ENCODE measurements at regions of chr15 and their contacts with region 1.

Region 1: DNA sequence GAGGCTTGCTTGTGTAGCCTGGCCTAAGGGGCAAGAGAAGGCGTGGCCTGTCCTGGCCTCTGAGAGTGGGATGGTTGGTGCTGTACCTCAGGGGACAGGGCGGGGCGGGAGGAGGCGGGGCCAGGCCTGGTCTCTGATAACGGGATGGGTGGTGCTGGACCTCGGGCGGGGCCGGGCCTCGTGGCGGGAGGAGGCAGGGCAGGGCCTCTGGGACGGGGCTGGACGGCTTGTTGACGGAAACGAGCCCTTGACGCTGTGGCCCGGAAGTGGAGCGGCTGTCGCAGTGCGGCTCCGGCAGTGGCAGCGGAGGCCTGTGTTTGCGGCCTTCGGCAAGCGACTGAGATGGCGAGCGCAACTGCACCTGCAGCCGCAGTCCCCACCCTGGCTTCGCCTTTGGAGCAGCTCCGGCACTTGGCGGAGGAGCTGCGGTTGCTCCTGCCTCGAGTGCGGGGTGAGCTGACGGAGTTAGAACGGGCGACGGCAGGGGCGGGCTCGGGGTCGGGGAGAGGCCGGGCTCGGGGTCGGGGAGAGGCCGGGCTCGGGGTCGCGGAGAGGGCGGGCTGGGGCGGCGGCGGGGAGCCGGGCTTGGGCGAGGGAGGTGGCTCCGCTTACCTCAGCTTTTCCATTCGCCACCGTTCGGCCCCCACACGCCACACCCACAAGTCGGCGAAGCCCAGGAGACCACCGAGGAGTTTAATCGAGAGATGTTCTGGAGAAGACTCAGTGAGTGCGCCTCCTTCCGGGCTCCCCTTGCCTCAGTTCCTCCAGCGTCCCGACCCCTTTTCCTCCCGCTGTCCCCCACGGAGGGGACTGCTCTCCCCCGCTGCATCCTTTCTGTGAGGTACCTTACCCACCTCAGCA is at the start of gene CCNDBP1:
- DNase-seq: peak; percentile 85
- ATAC-seq: peak; percentile 93
- H3K4me3 Mint-ChIP-seq: peak within 1 kb of the TSS; percentile 97
- H3K27ac Mint-ChIP-seq: peak within 1 kb of the TSS; percentile 96
- H3K4me1 Mint-ChIP-seq: peaks cover 32% of the 10 kb centered on the region
- H3K27me3 Mint-ChIP-seq: no peaks in the 10 kb centered on the region
- CTCF ChIP-seq: no peak
- total RNA-seq, gene CCNDBP1: 65.6 and 67.2 TPM in 2 replicates

Region 2: GRCh38 chr15:42704492-42704926 is 480.9 kb before region 1 on chr15:
- CTCF ChIA-PET with region 1: no interaction called
- POLR2A ChIA-PET with region 1: no interaction called
- intact Hi-C with region 1: loop called (anchors 1 kb)
- DNase-seq: peak; percentile 24
- ATAC-seq: peak; percentile 90
- H3K4me3 Mint-ChIP-seq: no peak overlapping the region
- H3K27ac Mint-ChIP-seq: no peak overlapping the region
- H3K4me1 Mint-ChIP-seq: no peaks in the 10 kb centered on the region
- H3K27me3 Mint-ChIP-seq: no peaks in the 10 kb centered on the region
- CTCF ChIP-seq: no peak

Region 3: DNA sequence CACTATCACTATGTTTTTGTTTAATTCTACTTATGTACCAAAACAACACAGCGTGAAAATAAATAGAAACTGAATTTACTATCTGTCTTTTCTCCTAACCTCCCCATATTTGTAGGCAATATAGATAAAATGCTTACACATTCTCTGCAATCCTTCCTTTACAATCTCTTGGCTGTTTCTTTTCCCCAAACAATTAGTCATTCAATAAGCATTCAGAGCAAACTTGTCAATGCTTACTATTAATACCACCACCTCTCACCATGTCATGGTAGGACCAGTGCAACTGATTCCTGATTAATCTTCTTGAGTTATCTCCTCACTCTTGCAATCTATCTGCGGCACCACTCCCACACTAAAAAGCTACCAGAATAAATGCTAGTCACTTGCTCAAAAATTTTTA is 190.8 kb before region 1 on chr15:
- CTCF ChIA-PET with region 1: no interaction called
- POLR2A ChIA-PET with region 1: no interaction called
- intact Hi-C with region 1: no loop called
- DNase-seq: no peak
- ATAC-seq: no peak
- H3K4me3 Mint-ChIP-seq: no peak overlapping the region
- H3K27ac Mint-ChIP-seq: no peak overlapping the region
- H3K4me1 Mint-ChIP-seq: no peaks in the 10 kb centered on the region
- H3K27me3 Mint-ChIP-seq: no peaks in the 10 kb centered on the region
- CTCF ChIP-seq: no peak

Region 4: DNA sequence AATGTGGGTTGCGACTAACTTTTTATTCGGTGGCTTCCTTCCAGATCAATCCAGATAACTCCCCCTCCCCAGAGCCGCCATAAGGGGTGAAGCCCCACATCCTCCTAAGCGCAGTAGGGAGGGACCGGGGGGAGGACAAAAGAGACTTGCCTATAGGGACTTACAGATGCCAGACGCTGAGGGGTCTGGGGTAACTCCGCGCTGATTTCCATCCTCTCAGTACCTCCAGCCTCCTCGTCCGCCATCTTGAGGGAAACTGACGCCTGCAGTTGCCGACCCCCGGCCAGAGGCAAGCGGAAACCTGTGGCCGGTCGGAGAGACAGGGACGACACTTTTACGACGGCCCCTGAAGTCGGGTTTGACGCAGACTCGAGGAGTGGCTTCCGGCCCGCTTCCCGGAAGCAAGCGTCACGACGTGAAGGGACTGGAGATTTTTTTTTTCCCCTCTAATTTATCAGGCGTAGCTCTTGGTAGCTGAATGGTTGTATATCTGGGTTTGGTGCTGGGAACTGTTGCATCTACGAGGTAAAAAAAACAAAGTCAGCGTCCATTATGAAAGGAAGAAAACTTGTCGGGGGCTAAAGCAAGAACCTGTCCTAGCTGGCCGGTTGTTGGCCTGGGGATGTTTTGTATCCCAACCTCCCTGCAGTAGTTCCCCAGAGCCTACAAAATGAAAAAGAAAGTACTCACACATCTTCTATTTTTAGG is 79.5 kb before region 1 on chr15 and contains the start of gene UBR1:
- CTCF ChIA-PET with region 1: no interaction called
- POLR2A ChIA-PET with region 1: interaction called, 9 read pairs
- intact Hi-C with region 1: loop called (anchors 1 kb)
- DNase-seq: peak; percentile 78
- ATAC-seq: peak; percentile 94
- H3K4me3 Mint-ChIP-seq: peak within 1 kb of the TSS; percentile 98
- H3K27ac Mint-ChIP-seq: peak within 1 kb of the TSS; percentile 98
- H3K4me1 Mint-ChIP-seq: peaks cover 46% of the 10 kb centered on the region
- H3K27me3 Mint-ChIP-seq: no peaks in the 10 kb centered on the region
- CTCF ChIP-seq: no peak
- total RNA-seq, gene UBR1: 46.6 and 48.9 TPM in 2 replicates

Region 5: GRCh38 chr15:43204016-43204901 is 18.9 kb after region 1 on chr15:
- CTCF ChIA-PET with region 1: interaction called, 8 read pairs
- POLR2A ChIA-PET with region 1: no interaction called
- intact Hi-C with region 1: loop called (anchors 2 kb)
- DNase-seq: peak; percentile 28
- ATAC-seq: peak; percentile 56
- H3K4me3 Mint-ChIP-seq: no peak overlapping the region
- H3K27ac Mint-ChIP-seq: no peak overlapping the region
- H3K4me1 Mint-ChIP-seq: peaks cover 6% of the 10 kb centered on the region
- H3K27me3 Mint-ChIP-seq: peaks cover 8% of the 10 kb centered on the region
- CTCF ChIP-seq: peak; percentile 29

Region 6: GRCh38 chr15:43329960-43330779 is 144.8 kb after region 1 on chr15 and contains the start of gene LCMT2:
- CTCF ChIA-PET with region 1: no interaction called
- POLR2A ChIA-PET with region 1: no interaction called
- intact Hi-C with region 1: loop called (anchors 1 kb)
- DNase-seq: peak; percentile 85
- ATAC-seq: peak; percentile 85
- H3K4me3 Mint-ChIP-seq: peak within 1 kb of the TSS; percentile 97
- H3K27ac Mint-ChIP-seq: peak within 1 kb of the TSS; percentile 99
- H3K4me1 Mint-ChIP-seq: peaks cover 32% of the 10 kb centered on the region
- H3K27me3 Mint-ChIP-seq: no peaks in the 10 kb centered on the region
- CTCF ChIP-seq: no peak
- total RNA-seq, gene LCMT2: 15.5 and 17.1 TPM in 2 replicates

Region 7: GRCh38 chr15:43749690-43750345 is 564.4 kb after region 1 on chr15:
- CTCF ChIA-PET with region 1: no interaction called
- POLR2A ChIA-PET with region 1: no interaction called
- intact Hi-C with region 1: loop called (anchors 2 kb)
- DNase-seq: no peak
- ATAC-seq: peak; percentile 41
- H3K4me3 Mint-ChIP-seq: peak overlapping the region; percentile 72
- H3K27ac Mint-ChIP-seq: peak overlapping the region; percentile 87
- H3K4me1 Mint-ChIP-seq: peaks cover 70% of the 10 kb centered on the region
- H3K27me3 Mint-ChIP-seq: no peaks in the 10 kb centered on the region
- CTCF ChIP-seq: no peak